CD4-positive, alpha-beta memory T cell (primary cell): ENCODE measurements at regions of chr9 and their contacts with region 1.

Region 1: DNA sequence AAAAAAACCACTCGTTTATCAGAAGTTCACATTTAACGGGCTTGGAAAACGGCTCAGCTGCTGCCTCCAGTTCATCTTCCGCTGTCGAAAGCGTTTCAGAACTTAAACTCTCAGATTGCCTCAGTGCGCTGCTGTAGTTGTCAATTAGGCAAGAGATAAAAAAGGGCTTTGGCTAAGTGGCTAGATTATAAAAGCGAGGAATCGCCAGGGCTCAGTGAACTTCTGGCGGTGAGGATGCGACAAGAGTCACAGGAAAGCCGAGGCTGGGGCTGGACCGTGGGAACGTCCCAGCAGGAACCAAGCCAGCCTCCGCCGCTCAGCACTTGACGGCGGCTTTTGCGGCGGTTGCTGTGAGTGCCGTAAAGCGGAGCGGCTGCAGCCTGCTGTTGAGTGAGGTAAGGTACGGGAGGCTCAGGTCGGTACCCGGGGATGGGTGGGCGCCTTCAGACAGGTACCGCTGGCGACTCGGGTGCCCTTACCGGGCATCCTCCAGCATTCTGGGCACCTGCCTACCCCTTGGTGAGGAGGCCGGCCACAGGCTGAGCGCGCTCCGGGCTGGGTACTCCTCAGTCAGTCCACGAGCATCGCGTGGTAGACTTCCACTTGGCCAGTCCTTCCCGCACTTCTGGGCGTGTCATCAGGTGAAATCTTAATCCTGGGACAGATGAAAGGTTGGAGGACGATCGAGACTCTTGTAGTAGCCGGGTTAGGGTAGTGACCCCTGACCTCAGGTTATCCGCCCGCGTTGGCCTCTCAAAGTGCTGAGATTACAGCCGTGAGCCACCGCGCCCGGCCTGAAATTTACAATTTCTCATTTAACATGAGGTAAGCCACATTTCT is at the start of gene FKTN:
- DNase-seq: peak; percentile 81 to 86 (median 83)
- H3K4me3 ChIP-seq: peak within 1 kb of the TSS; percentile 76 to 77
- H3K4me3 Mint-ChIP-seq: peak within 1 kb of the TSS; percentile 89 to 97 (median 96)
- H3K27ac ChIP-seq: peak within 1 kb of the TSS; percentile 46
- H3K27ac Mint-ChIP-seq: peak within 1 kb of the TSS; percentile 74 to 95 (median 90)
- H3K4me1 ChIP-seq: peaks cover 10% of the 10 kb centered on the region
- H3K4me1 Mint-ChIP-seq: peaks cover 14 to 24% (median 20%) of the 10 kb centered on the region in 4 donors
- H3K27me3 ChIP-seq: no peaks in the 10 kb centered on the region
- H3K27me3 Mint-ChIP-seq: no peaks in the 10 kb centered on the region
- total RNA-seq, gene FKTN: 13.9 to 14.2 TPM

Region 2: GRCh38 chr9:104093647-104094533 is 1464.1 kb before region 1 on chr9 and contains the start of gene SMC2:
- CTCF ChIA-PET with region 1: no interaction called
- POLR2A ChIA-PET with region 1: interaction called, 3 read pairs
- intact Hi-C with region 1: loop called (anchors 5 kb)
- DNase-seq: peak; percentile 93 to 96 (median 95)
- H3K4me3 ChIP-seq: peak within 1 kb of the TSS; percentile 63 to 90
- H3K4me3 Mint-ChIP-seq: peak within 1 kb of the TSS; percentile 98 to 100 (median 99)
- H3K27ac ChIP-seq: peak within 1 kb of the TSS; percentile 79
- H3K27ac Mint-ChIP-seq: peak within 1 kb of the TSS; percentile 99 to 100 (median 99)
- H3K4me1 ChIP-seq: peaks cover 30% of the 10 kb centered on the region
- H3K4me1 Mint-ChIP-seq: peaks cover 26 to 46% (median 30%) of the 10 kb centered on the region in 4 donors
- H3K27me3 ChIP-seq: no peaks in the 10 kb centered on the region
- H3K27me3 Mint-ChIP-seq: peaks cover 0 to 3% of the 10 kb centered on the region in 2 donors
- total RNA-seq, gene SMC2: 9.7 to 10.4 TPM

Region 3: DNA sequence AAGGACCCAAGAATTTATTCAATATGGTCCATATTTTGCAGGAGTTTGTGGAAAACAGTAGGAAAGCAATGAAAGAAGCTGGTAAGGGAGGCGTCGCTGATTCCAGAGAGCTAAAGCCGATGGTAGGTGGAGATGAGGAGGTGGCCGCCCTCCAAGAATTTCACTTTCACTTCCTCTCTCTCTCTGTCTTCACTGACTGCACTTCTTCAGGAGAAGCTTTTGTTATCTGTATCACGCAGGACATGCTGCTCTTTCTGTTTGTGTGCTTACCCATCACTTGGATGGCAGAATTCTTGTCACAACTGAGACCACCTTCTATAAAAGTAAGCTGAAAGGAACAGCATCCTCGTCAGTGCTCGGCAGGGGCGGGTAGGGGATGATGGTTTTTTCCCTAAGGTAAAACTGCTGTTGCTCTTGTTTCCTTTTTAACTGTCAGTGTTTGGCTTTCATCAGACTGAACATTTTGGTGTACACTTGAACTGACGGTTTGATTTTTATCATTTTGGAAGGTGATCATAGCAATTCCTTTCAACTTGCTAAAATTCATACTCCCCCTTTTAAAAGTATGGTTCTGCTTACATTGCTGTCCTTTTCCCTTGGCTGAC is 172.5 kb before region 1 on chr9:
- CTCF ChIA-PET with region 1: interaction called, 3 read pairs
- POLR2A ChIA-PET with region 1: no interaction called
- intact Hi-C with region 1: loop called (anchors 10 kb)
- DNase-seq: peak in 4 of 5 donors; percentile 23 to 33 (median 28)
- H3K4me3 ChIP-seq: peak overlapping the region; percentile 15 to 45
- H3K4me3 Mint-ChIP-seq: peak overlapping the region; percentile 79 to 94 (median 90)
- H3K27ac ChIP-seq: no peak overlapping the region
- H3K27ac Mint-ChIP-seq: peak overlapping the region in 5 of 7 donors; percentile 1 to 83 (median 74)
- H3K4me1 ChIP-seq: peaks cover 10% of the 10 kb centered on the region
- H3K4me1 Mint-ChIP-seq: peaks cover 11 to 16% (median 13%) of the 10 kb centered on the region in 4 donors
- H3K27me3 ChIP-seq: no peaks in the 10 kb centered on the region
- H3K27me3 Mint-ChIP-seq: peaks cover 0 to 1% of the 10 kb centered on the region in 2 donors

Region 4: GRCh38 chr9:105447814-105448812 is 109.9 kb before region 1 on chr9 and contains the start of gene FSD1L:
- CTCF ChIA-PET with region 1: no interaction called
- POLR2A ChIA-PET with region 1: no interaction called
- intact Hi-C with region 1: loop called (anchors 2 kb)
- DNase-seq: peak; percentile 70 to 78 (median 74)
- H3K4me3 ChIP-seq: peak within 1 kb of the TSS; percentile 63 to 71
- H3K4me3 Mint-ChIP-seq: peak within 1 kb of the TSS; percentile 84 to 89 (median 88)
- H3K27ac ChIP-seq: peak within 1 kb of the TSS; percentile 45
- H3K27ac Mint-ChIP-seq: peak within 1 kb of the TSS in 6 of 7 donors; percentile 35 to 83 (median 73)
- H3K4me1 ChIP-seq: peaks cover 14% of the 10 kb centered on the region
- H3K4me1 Mint-ChIP-seq: peaks cover 7 to 12% (median 9%) of the 10 kb centered on the region in 4 donors
- H3K27me3 ChIP-seq: no peaks in the 10 kb centered on the region
- H3K27me3 Mint-ChIP-seq: no peaks in the 10 kb centered on the region
- total RNA-seq, gene FSD1L: 1.6 TPM